ENCODE measurements at regions of chr19 and their contacts with region 1.

Region 1: GRCh38 chr19:14432791-14433553 is at the start of gene PKN1:
- DNase-seq: no peak
- ATAC-seq: peak; percentile 69
- H3K4me3 ChIP-seq: peak within 1 kb of the TSS; percentile 90
- H3K27ac ChIP-seq: peak within 1 kb of the TSS; percentile 65
- H3K4me1 ChIP-seq: peaks cover 22% of the 10 kb centered on the region
- H3K27me3 ChIP-seq: no peaks in the 10 kb centered on the region
- CTCF ChIP-seq: no peak
- EP300 ChIP-seq: no peak
- POLR2A ChIP-seq: peak; percentile 34; the same call in 1 of the 2 replicates
- RAD21 ChIP-seq: no peak
- polyA plus RNA-seq, gene PKN1: 1.0 to 1.4 TPM

Region 2: DNA sequence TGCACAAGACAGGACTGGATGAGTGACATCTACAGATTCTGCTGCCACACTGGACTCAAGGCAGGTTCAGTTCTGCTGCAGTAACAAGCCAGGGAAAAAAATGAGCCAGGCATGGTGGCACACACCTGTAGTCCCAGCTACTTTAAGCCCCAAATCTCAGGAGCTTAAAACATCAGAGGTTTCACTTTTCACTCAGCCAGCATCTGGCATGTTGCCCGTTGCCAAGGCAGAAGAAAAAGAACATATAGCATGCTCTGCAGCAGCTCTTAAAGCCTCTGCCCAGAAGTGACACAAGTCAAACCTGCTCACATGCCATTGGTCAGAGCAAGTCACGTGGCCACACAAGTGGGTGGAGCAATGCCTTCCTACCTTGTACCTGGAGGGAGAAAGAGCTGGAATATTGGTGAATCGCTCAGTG is 66.5 kb before region 1 on chr19:
- CTCF ChIA-PET with region 1: interaction called, 9 read pairs
- POLR2A ChIA-PET with region 1: interaction called, 5 read pairs
- RAD21 ChIA-PET with region 1: interaction called, 12 read pairs
- SMC1A ChIA-PET with region 1: interaction called, 4 read pairs
- in situ Hi-C with region 1: no loop called
- intact Hi-C with region 1: no loop called
- DNase-seq: peak; percentile 98
- ATAC-seq: peak; percentile 63
- H3K4me3 ChIP-seq: no peak overlapping the region
- H3K27ac ChIP-seq: peak overlapping the region; percentile 36; the same call in 1 of the 2 replicates
- H3K4me1 ChIP-seq: peaks cover 59% of the 10 kb centered on the region
- H3K27me3 ChIP-seq: no peaks in the 10 kb centered on the region
- CTCF ChIP-seq: no peak
- EP300 ChIP-seq: no peak
- POLR2A ChIP-seq: peak; percentile 48; the same call in 1 of the 2 replicates
- RAD21 ChIP-seq: no peak

Region 3: DNA sequence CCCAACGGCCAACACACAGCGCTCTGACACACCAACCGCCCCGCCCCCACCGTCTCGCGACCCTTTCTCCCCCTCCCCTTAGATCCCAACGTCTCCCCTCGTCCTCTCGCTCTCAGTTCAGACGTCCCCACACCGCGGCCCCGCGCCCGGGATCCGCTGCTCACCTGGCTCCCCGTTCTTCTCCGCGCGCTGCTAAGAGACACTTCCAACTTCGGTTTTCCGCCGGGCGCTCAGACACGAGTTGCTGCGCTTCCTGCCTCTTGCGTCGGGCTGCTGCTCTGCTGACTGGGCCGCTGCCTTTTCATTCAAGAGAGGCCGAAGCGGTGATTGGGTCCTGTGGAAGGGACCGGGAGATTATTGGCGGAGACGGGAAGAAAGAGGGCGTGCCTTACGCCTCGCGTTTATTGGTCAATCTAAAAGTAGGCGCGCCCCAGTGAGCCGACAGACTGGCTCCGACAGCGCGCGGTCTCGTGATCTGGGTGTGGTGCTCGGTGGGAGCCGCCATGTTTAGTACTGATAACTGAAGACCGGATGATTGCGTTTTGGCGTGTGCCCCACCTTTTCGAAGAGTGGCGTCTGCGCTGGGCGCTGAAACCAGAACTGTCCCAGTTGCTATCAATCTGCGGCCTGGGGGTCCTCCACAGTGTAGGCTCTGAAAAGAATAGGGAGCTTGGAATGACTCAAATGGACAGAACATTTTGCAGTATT is 13.7 kb before region 1 on chr19 and contains the start of gene DDX39A:
- CTCF ChIA-PET with region 1: interaction called, 37 read pairs
- POLR2A ChIA-PET with region 1: interaction called, 8 read pairs
- RAD21 ChIA-PET with region 1: interaction called, 7 read pairs
- SMC1A ChIA-PET with region 1: interaction called, 13 read pairs
- in situ Hi-C with region 1: no loop called
- intact Hi-C with region 1: no loop called
- DNase-seq: peak; percentile 97
- ATAC-seq: peak; percentile 94
- H3K4me3 ChIP-seq: peak within 1 kb of the TSS; percentile 61
- H3K27ac ChIP-seq: peak within 1 kb of the TSS; percentile 95
- H3K4me1 ChIP-seq: peaks cover 23% of the 10 kb centered on the region
- H3K27me3 ChIP-seq: no peaks in the 10 kb centered on the region
- CTCF ChIP-seq: no peak
- EP300 ChIP-seq: 0 out of 4 replicates have a peak, but pooled peaks of 1 of the 2 experiments have one; percentile 22
- POLR2A ChIP-seq: peak; percentile 99
- RAD21 ChIP-seq: no peak
- polyA plus RNA-seq, gene DDX39A: 168 to 212 TPM

Region 4: DNA sequence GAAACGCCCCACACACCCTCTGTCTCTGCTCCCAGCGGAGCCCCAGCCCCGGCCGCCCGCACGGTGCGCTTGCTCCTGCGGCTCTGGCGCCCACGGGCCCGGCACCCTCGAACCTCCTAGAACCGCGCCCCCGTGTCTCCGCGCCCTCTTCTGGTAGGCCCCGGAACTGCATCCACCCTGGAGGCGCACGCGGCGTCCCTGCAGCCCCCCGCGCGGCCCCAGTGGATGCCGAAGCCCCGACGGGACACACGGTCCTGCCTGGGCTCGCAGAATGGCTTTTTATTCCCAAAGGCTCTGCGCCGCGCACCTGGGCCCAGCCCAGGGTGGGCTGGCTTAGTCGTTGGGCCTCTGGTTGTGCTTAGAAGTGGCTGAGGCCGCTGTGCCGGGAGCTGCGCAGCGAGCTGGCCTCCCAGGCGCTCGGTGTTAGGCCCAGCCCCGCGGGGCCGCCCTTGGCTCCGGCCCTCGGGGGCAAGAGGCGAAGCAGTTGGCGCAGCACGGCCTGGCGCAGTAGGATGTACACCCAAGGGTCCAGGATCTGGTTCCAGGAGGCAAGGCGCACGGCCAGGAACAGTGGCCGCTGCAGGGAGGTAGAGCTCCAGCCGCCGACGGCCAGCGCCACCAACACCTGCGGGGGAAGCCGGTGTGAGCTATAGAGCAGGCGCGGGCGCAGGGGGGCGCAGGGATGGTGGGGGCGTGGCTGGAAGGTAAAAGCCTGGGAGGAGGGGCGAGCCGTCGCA is 39.4 kb after region 1 on chr19:
- CTCF ChIA-PET with region 1: interaction called, 42 read pairs
- POLR2A ChIA-PET with region 1: no interaction called
- RAD21 ChIA-PET with region 1: interaction called, 4 read pairs
- SMC1A ChIA-PET with region 1: interaction called, 3 read pairs
- in situ Hi-C with region 1: no loop called
- intact Hi-C with region 1: loop called (anchors 5 kb)
- DNase-seq: no peak
- ATAC-seq: peak; percentile 86
- H3K4me3 ChIP-seq: no peak overlapping the region
- H3K27ac ChIP-seq: no peak overlapping the region
- H3K4me1 ChIP-seq: no peaks in the 10 kb centered on the region
- H3K27me3 ChIP-seq: peaks cover 5 to 6% of the 10 kb centered on the region in 2 experiments; a peak in 3 of 4 replicates
- CTCF ChIP-seq: peak; percentile 77 to 99 (median 80)
- EP300 ChIP-seq: no peak
- POLR2A ChIP-seq: peak; percentile 64
- RAD21 ChIP-seq: peak; percentile 36

Region 5: DNA sequence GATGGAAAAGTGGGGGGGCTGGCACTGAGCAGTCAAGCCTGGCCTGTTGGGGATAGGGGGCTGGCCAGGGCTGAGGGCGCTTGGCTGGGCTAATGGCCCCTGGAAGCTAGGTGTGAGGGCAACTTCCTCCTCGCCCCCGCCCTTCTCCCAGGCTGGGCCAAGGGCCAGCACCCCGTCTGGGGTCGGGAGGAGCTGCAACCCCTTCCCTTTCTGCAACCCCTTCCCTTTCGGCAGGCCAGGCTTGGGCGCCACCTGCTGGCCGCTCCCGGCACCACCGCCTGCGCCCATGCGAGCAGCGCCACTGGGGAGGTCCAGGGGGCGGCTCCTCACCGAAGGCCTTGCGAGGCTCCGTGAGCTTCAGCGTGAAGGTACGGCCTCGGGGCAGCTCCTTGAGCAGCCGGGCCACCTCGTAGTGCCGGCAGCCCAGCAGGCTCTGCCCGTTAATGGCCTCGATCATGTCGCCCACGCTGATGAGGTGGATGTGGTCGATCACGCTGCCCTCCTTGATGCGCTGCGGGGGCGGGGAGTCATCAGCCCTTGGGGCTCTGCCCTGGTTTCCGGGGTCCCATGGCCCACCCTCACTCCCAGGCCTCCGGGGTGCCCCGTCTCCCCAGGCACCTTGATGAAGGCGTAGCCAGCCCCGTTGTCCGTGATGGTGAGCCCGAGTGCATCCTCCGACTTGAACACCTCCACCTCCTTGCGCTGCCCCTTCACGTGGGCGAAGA is 47.2 kb after region 1 on chr19:
- CTCF ChIA-PET with region 1: interaction called, 42 read pairs
- POLR2A ChIA-PET with region 1: interaction called, 8 read pairs
- RAD21 ChIA-PET with region 1: interaction called, 6 read pairs
- SMC1A ChIA-PET with region 1: interaction called, 10 read pairs
- in situ Hi-C with region 1: no loop called
- intact Hi-C with region 1: loop called (anchors 2 kb)
- DNase-seq: no peak
- ATAC-seq: peak; percentile 92
- H3K4me3 ChIP-seq: no peak overlapping the region
- H3K27ac ChIP-seq: no peak overlapping the region
- H3K4me1 ChIP-seq: no peaks in the 10 kb centered on the region; the same call in 1 of the 2 replicates
- H3K27me3 ChIP-seq: no peaks in the 10 kb centered on the region
- CTCF ChIP-seq: peak; percentile 86 to 96 (median 86)
- EP300 ChIP-seq: no peak
- POLR2A ChIP-seq: no peak
- RAD21 ChIP-seq: peak; percentile 53